ENCODE measurements at regions of chr20 and their contacts with region 1.

Region 1: DNA sequence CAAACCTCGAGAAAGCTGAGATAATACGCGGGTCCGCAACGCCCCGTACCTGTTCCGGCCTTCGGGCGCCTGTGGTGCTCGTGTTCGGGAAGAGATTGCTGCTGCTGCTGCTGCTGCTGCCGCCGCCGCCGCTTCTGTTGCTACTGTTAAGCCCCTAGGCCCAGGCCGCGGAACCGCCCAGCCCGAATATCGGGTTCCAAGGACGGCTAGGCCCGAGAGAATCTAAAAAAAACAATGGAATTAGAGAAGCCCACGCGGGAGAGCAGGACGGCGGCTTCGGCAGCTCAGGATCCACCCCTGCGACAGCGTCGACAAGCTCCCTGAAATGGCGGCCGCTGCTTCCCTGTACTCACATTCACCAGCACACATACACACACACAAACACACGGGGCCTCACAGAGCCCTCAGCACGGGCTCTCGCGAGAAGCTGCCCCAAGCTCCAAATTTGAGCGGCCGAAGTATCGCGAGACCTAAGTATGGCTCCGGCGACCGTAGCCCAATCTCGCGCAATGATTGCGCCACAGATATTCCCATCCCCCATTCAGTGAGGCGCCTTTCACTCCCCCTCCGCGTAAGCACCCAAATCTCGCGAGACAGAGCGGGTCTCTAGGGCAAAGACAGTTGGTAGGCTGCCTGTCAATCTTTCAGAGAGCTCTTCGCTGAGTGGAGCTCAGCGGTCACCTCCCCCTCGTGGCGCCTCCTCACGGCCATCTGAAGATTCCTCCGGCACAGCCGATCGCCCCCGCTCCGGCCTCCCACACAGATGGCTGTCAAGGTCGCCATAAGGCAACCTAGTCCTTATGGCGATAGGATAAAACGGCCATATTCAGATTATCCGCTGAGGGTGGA is at the start of gene RBM39:
- DNase-seq: peak; percentile 100
- ATAC-seq: peak; percentile 95
- H3K4me3 ChIP-seq: peak within 1 kb of the TSS; percentile 90 to 91
- H3K27ac ChIP-seq: peak within 1 kb of the TSS; percentile 100
- H3K4me1 ChIP-seq: peaks cover 21% of the 10 kb centered on the region
- H3K27me3 ChIP-seq: no peaks in the 10 kb centered on the region
- CTCF ChIP-seq: no peak
- total RNA-seq, gene RBM39: 282 TPM

Region 2: GRCh38 chr20:35664544-35665221 is 77.4 kb before region 1 on chr20 and contains the starts of genes CPNE1 and RBM12:
- CTCF ChIA-PET with region 1: interaction called, 11 read pairs
- POLR2A ChIA-PET with region 1: no interaction called
- in situ Hi-C with region 1: no loop called
- intact Hi-C with region 1: no loop called
- DNase-seq: peak; percentile 87
- ATAC-seq: peak; percentile 97
- H3K4me3 ChIP-seq: peak within 1 kb of the TSS; percentile 93 to 99
- H3K27ac ChIP-seq: peak within 1 kb of the TSS; percentile 97
- H3K4me1 ChIP-seq: peaks cover 23% of the 10 kb centered on the region
- H3K27me3 ChIP-seq: no peaks in the 10 kb centered on the region
- CTCF ChIP-seq: no peak
- total RNA-seq, gene CPNE1: 217 TPM
- total RNA-seq, gene RBM12: 100 TPM

Region 3: DNA sequence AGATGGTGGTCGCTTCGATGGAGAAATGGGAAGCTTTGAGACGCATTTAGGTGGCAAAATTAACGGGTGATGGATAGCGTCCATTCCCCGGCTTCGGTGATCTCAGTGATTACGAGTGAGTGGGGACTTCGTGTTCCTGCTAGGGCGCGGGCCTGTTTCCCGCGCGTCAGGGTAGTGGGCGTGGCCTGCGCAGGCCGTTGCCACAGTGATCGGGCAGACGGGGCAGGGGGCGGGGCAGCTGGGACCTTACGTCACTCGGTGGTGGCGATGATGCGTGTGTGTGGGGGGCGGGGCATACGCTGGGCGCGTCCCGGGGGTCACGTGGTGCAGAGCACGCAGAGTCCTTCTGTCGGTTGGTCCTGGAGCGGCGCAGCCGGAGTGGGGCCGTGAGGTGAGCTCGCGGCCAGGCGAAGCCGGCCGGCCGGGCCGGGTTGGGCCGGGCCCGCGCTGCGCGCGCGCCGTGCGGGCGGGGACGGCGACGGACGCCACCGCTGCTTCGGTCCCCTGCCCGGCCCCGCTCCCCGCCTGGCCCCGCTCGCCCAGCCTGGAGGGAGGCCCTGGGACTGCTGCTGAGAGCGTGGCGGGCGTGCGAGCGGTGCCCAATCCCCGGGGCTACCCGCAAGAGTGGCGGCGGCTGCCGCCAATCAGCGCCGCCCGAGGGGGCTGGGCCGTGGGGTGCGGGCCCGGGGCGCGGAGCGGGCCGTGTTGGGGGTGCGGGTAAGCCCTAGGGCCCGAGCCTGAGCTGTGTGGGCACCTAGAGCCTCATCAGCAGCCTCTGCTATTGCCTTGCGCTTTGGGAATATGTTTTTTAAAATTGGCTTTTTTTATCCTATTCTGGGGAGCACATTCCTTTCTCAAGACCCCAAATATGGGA is 29.8 kb after region 1 on chr20 and contains the start of gene PHF20:
- CTCF ChIA-PET with region 1: interaction called, 3 read pairs
- POLR2A ChIA-PET with region 1: interaction called, 34 read pairs
- in situ Hi-C with region 1: no loop called
- intact Hi-C with region 1: no loop called
- DNase-seq: peak; percentile 78
- ATAC-seq: peak; percentile 97
- H3K4me3 ChIP-seq: peak within 1 kb of the TSS; percentile 79 to 81
- H3K27ac ChIP-seq: peak within 1 kb of the TSS; percentile 95
- H3K4me1 ChIP-seq: peaks cover 34% of the 10 kb centered on the region
- H3K27me3 ChIP-seq: no peaks in the 10 kb centered on the region
- CTCF ChIP-seq: no peak
- total RNA-seq, gene PHF20: 51.5 TPM

Region 4: GRCh38 chr20:35791821-35792220 is 49.7 kb after region 1 on chr20:
- CTCF ChIA-PET with region 1: no interaction called
- POLR2A ChIA-PET with region 1: no interaction called
- in situ Hi-C with region 1: no loop called
- intact Hi-C with region 1: no loop called
- DNase-seq: no peak
- ATAC-seq: no peak; the same call in 1 of the 2 replicates
- H3K4me3 ChIP-seq: no peak overlapping the region
- H3K27ac ChIP-seq: no peak overlapping the region
- H3K4me1 ChIP-seq: no peaks in the 10 kb centered on the region
- H3K27me3 ChIP-seq: no peaks in the 10 kb centered on the region
- CTCF ChIP-seq: no peak

Region 5: GRCh38 chr20:35883778-35884540 is 141.8 kb after region 1 on chr20:
- CTCF ChIA-PET with region 1: interaction called, 3 read pairs
- POLR2A ChIA-PET with region 1: interaction called, 12 read pairs
- in situ Hi-C with region 1: no loop called
- intact Hi-C with region 1: loop called (anchors 5 kb)
- DNase-seq: peak; percentile 95
- ATAC-seq: peak; percentile 95
- H3K4me3 ChIP-seq: peak overlapping the region; percentile 23 to 52
- H3K27ac ChIP-seq: peak overlapping the region; percentile 69
- H3K4me1 ChIP-seq: peaks cover 10% of the 10 kb centered on the region
- H3K27me3 ChIP-seq: no peaks in the 10 kb centered on the region
- CTCF ChIP-seq: peak; percentile 93

Region 6: GRCh38 chr20:35901678-35902544 is 159.8 kb after region 1 on chr20:
- CTCF ChIA-PET with region 1: no interaction called
- POLR2A ChIA-PET with region 1: interaction called, 10 read pairs
- in situ Hi-C with region 1: no loop called
- intact Hi-C with region 1: no loop called
- DNase-seq: peak; percentile 60
- ATAC-seq: peak; percentile 94
- H3K4me3 ChIP-seq: no peak overlapping the region
- H3K27ac ChIP-seq: no peak overlapping the region
- H3K4me1 ChIP-seq: peaks cover 6% of the 10 kb centered on the region; the same call in 1 of the 2 replicates
- H3K27me3 ChIP-seq: no peaks in the 10 kb centered on the region
- CTCF ChIP-seq: no peak

Measured in Panc1 (cell line).